Gastrocnemius medialis (tissue), 4 donors: ENCODE measurements at regions of chr13 and their contacts with region 1.

Region 1: GRCh38 chr13:45464687-45465453 is at the start of gene COG3:
- DNase-seq: peak; percentile 93 to 94
- ATAC-seq: peak; percentile 99
- H3K4me3 ChIP-seq: peak within 1 kb of the TSS; percentile 87 to 99 (median 94)
- H3K27ac ChIP-seq: peak within 1 kb of the TSS; percentile 87 to 99 (median 92)
- H3K4me1 ChIP-seq: peaks cover 41% of the 10 kb centered on the region in 2 donors
- H3K27me3 ChIP-seq: no peaks in the 10 kb centered on the region
- CTCF ChIP-seq: peak in 2 of 5 experiments; percentile 39 to 47
- POLR2A ChIP-seq: peak; percentile 68 to 83
- total RNA-seq, gene COG3: 10.4 to 20.3 (median 17.8) TPM

Region 2: GRCh38 chr13:45340926-45341750 is 123.7 kb before region 1 on chr13 and contains the start of gene TPT1:
- in situ Hi-C with region 1: loop called in 1 of 4 experiments (anchors 10 kb)
- intact Hi-C with region 1: loop called (anchors 1 kb)
- DNase-seq: peak; percentile 99 to 100
- ATAC-seq: peak; percentile 78 to 84
- H3K4me3 ChIP-seq: peak within 1 kb of the TSS; percentile 73 to 100 (median 90)
- H3K27ac ChIP-seq: peak within 1 kb of the TSS; percentile 97 to 100 (median 99)
- H3K4me1 ChIP-seq: peaks cover 36 to 51% of the 10 kb centered on the region in 2 donors
- H3K27me3 ChIP-seq: no peaks in the 10 kb centered on the region
- CTCF ChIP-seq: peak in 1 of 5 experiments; percentile 11
- POLR2A ChIP-seq: peak; percentile 95 to 97
- total RNA-seq, gene TPT1: 4,595 to 7,577 (median 5,951) TPM

Region 3: DNA sequence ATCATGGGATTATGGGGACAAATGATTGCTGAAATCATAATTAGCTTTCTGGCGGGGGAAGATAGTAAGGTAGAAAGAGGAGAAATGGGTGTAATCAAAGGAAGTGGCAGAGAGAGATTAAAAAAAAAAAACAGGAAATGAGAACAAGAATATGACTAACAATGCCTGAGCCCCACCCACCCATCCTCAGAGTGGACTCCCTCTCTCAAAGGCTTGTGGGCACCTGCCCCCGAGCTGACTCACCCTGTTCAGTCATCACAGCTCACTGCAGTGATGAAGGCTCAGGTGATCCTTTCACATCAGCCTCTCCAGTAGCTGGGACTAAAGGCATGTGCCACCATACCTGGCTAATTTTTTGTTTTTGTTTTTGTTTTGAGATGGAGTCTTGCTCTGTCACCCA is 97.5 kb before region 1 on chr13:
- in situ Hi-C with region 1: loop called in 1 of 4 experiments (anchors 10 kb)
- intact Hi-C with region 1: loop called (anchors 1 kb)
- DNase-seq: peak in 1 of 2 donors; percentile 39
- ATAC-seq: no peak
- H3K4me3 ChIP-seq: no peak overlapping the region
- H3K27ac ChIP-seq: no peak overlapping the region
- H3K4me1 ChIP-seq: peaks cover 21 to 30% of the 10 kb centered on the region in 2 donors
- H3K27me3 ChIP-seq: no peaks in the 10 kb centered on the region
- CTCF ChIP-seq: no peak
- POLR2A ChIP-seq: no peak

Region 4: DNA sequence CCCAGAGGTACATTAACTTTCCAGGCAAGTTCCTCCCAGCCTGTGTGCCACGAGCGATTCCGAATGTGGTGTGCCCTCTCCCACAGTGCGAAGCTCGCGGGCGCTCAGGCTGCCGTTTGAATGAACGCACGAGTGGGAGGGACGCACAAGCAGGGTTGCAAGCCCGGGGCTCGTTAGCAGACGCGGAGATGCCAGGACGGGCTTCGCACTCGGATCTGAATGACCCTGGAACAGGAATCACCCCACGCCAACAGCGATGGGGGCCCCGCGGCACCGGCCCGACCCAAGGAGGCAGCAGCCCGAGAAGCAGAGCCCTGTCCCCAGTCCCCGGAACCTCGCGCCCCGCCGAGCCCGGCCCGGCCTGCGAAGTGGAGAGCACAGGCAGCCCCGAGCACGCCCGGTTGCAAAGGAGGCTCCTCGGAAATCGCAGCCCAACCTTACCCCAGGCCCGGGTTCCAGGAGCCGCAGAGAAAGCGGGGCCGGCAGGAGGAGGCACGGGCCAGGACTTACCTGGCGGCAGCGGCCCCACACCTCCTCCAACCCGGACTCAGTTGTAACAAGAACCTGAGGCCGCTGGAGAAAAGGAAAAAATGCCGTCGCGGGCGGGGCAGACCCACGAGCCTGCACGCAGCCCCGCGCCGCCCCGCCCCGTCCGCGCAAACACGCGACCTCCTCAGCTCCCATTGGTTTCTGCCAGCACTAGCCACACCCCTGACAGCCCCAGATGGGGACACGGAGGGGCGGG is 46.9 kb before region 1 on chr13 and contains the start of gene SLC25A30:
- in situ Hi-C with region 1: no loop called
- intact Hi-C with region 1: loop called (anchors 1 kb)
- DNase-seq: peak; percentile 96 to 98
- ATAC-seq: peak; percentile 88 to 92
- H3K4me3 ChIP-seq: peak within 1 kb of the TSS; percentile 78 to 91 (median 85)
- H3K27ac ChIP-seq: peak within 1 kb of the TSS; percentile 91 to 99 (median 94)
- H3K4me1 ChIP-seq: peaks cover 32 to 39% of the 10 kb centered on the region in 2 donors
- H3K27me3 ChIP-seq: no peaks in the 10 kb centered on the region
- CTCF ChIP-seq: no peak
- POLR2A ChIP-seq: peak; percentile 88 to 95
- total RNA-seq, gene SLC25A30: 4.2 to 27.1 (median 14.6) TPM

Region 5: GRCh38 chr13:45441633-45442032 is 23.2 kb before region 1 on chr13:
- in situ Hi-C with region 1: no loop called
- intact Hi-C with region 1: loop called (anchors 2 kb)
- DNase-seq: no peak
- ATAC-seq: peak; percentile 26 to 34
- H3K4me3 ChIP-seq: no peak overlapping the region
- H3K27ac ChIP-seq: peak overlapping the region; percentile 82 to 93 (median 89)
- H3K4me1 ChIP-seq: peaks cover 22 to 30% of the 10 kb centered on the region in 2 donors
- H3K27me3 ChIP-seq: no peaks in the 10 kb centered on the region
- CTCF ChIP-seq: peak in 3 of 5 experiments; percentile 35 to 52 (median 47)
- POLR2A ChIP-seq: no peak